Gastrocnemius medialis (tissue), 4 donors: ENCODE measurements at regions of chr5 and their contacts with region 1.

Region 1: GRCh38 chr5:141564216-141564692 is 54.5 kb downstream of the DIAPH1 start:
- DNase-seq: peak; percentile 59 to 63
- ATAC-seq: peak; percentile 77
- H3K4me3 ChIP-seq: peak overlapping the region in 2 of 4 donors; percentile 8 to 20
- H3K27ac ChIP-seq: peak overlapping the region; percentile 77 to 92 (median 88)
- H3K4me1 ChIP-seq: peaks cover 31 to 40% of the 10 kb centered on the region in 2 donors
- H3K27me3 ChIP-seq: no peaks in the 10 kb centered on the region
- CTCF ChIP-seq: peak; percentile 92 to 100 (median 96)
- POLR2A ChIP-seq: no peak

Region 2: DNA sequence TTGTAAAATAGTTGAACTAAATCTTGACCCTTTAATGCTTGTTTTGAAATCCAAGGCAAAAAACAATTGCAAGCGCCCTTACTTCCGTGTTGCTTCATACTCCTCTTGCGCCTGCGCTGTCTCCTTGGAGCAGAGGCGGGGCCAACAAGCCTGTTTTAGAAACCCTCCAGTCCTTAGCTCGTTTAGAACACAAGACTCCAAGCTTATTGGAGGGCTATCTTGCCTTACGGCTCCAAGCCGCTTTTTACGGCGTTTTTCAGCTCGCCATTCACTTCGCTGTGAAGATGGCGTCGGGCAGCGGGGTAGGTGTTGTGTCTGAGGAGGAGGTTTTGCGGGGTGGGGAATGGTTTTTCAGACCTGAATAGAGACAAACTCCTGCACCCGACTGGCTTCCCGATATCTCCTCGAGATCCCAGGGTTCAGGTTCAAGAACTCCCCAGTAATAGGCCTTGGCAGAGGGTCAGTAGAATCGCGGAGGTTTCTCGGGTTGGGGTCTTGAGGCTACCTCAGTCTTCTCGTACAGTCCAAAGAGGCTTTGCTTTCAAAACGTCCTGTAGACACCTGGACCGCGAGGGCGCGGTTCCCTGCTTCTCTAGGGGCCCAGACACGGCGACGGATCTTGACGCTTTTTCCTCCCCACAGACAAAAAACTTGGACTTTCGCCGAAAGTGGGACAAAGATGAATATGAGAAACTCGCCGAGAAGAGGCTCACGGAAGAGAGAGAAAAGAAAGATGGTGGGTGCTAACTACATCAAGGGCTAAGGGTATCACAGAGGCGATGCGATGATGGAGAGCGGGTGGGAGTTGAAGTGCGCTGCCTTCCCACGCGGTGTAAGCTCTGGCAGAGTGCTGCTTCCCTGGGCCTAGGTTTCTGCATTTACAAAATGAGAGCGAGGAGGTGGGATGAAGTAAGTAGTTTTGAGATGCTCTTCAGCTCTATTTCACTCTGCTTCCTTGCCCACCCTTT is 863.8 kb before region 1 on chr5 and contains the start of gene ZMAT2:
- in situ Hi-C with region 1: loop called in 1 of 4 experiments (anchors 25 kb)
- intact Hi-C with region 1: no loop called
- DNase-seq: peak; percentile 92 to 96
- ATAC-seq: peak; percentile 100
- H3K4me3 ChIP-seq: peak within 1 kb of the TSS; percentile 66 to 98 (median 80)
- H3K27ac ChIP-seq: peak within 1 kb of the TSS; percentile 79 to 89 (median 82)
- H3K4me1 ChIP-seq: peaks cover 15 to 16% of the 10 kb centered on the region in 2 donors
- H3K27me3 ChIP-seq: no peaks in the 10 kb centered on the region
- CTCF ChIP-seq: no peak
- POLR2A ChIP-seq: peak; percentile 84 to 87
- total RNA-seq, gene ZMAT2: 44.2 to 56.5 (median 51.9) TPM

Region 3: GRCh38 chr5:141223112-141223783 is 341.0 kb before region 1 on chr5 and contains the start of gene PCDHB14:
- in situ Hi-C with region 1: loop called in 2 of 4 experiments (anchors 25 kb)
- intact Hi-C with region 1: no loop called
- DNase-seq: no peak
- ATAC-seq: peak in 1 of 2 donors; percentile 61
- H3K4me3 ChIP-seq: peak within 1 kb of the TSS; percentile 3 to 47 (median 28)
- H3K27ac ChIP-seq: no peak within 1 kb of the TSS
- H3K4me1 ChIP-seq: no peaks in the 10 kb centered on the region
- H3K27me3 ChIP-seq: peaks cover 0 to 17% (median 0%) of the 10 kb centered on the region in 3 donors
- CTCF ChIP-seq: peak in 1 of 5 experiments; percentile 29
- POLR2A ChIP-seq: no peak
- total RNA-seq, gene PCDHB14: 0.62 to 1.9 (median 0.76) TPM

Region 4: DNA sequence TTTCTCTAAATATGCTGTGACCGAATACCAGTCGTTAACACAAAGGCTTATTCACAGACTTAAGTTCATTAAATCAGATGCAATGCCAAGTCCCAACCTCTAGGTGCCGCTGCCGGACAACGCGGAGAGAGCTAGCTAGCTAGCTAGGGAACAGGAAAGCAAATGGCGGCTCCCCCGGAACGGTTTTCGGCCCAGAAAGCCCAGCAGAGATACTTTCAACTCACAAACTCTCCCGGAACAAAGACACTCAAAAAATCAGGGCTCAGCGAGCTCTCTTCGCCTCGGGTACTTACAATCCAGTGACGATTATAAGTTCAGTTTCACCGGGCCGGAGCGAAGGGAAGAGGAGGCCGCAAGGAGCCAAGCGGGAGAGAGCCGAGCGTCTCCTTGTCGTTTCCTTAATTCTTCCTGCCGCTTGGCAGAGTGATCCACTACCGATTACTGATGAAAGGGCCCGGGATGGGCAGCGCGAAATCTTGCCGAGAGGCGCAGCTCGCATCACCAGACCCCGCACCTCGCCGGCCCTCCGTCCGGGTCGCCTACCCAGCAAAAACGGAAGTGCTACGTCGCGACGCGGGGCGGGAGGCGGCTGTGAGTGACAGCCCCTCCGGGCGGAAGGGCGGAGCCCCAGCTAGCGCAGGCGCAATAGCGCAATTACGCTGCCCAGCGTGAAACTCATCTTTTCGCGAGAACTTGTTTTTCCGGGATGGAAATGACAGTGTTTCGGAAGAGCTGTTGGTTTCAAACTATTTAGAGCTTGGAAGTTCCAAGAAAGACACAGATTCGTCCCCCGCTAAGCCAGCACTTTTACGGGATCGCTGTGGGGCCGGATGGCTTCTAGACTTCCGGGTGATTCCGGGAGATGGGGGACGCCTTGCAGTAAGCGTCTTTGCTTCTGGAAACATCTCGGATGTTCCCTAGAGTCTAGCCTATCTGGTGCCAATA is 243.8 kb before region 1 on chr5 and contains the start of gene TAF7:
- in situ Hi-C with region 1: loop called in 2 of 4 experiments (anchors 10 kb)
- intact Hi-C with region 1: loop called (anchors 2 kb)
- DNase-seq: peak; percentile 82 to 88
- ATAC-seq: peak; percentile 94 to 97
- H3K4me3 ChIP-seq: peak within 1 kb of the TSS; percentile 62 to 86 (median 84)
- H3K27ac ChIP-seq: peak within 1 kb of the TSS; percentile 85 to 97 (median 94)
- H3K4me1 ChIP-seq: peaks cover 32 to 35% of the 10 kb centered on the region in 2 donors
- H3K27me3 ChIP-seq: no peaks in the 10 kb centered on the region
- CTCF ChIP-seq: peak; percentile 79 to 95 (median 88)
- POLR2A ChIP-seq: peak; percentile 99 to 100
- total RNA-seq, gene TAF7: 60.9 to 91.2 (median 79.8) TPM

Region 5: DNA sequence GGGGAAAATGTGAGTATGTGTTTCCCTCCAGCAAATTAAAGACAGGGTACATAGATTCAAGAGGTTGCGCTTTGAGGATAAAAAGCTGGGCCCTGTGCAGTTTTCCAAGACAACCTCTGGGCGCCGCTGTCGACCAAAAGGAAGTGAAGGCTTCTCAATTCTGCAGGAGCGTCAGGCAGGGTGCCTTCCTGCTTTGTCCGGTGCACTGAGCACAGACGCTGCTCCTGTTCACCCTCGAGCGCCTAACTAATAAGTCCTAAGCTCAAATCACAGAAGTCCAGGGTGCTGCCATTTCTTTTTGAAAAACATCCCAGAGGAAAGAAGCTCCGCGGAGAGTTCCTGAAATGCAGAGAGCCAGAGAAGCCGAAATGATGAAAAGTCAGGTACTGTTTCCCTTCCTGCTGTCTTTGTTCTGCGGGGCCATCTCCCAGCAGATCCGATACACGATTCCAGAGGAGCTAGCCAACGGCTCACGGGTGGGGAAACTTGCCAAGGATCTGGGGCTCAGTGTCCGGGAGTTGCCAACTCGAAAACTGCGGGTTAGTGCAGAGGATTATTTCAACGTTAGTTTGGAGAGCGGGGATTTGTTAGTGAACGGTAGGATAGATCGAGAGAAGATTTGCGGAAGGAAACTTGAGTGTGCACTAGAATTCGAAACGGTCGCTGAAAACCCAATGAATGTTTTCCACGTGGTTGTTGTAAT is 214.2 kb before region 1 on chr5 and contains the start of gene PCDHGB1:
- in situ Hi-C with region 1: loop called in 1 of 4 experiments (anchors 10 kb)
- intact Hi-C with region 1: no loop called
- DNase-seq: peak in 1 of 2 donors; percentile 42
- ATAC-seq: peak; percentile 42 to 87
- H3K4me3 ChIP-seq: peak within 1 kb of the TSS; percentile 14 to 31 (median 27)
- H3K27ac ChIP-seq: peak within 1 kb of the TSS in 1 of 4 donors; percentile 29
- H3K4me1 ChIP-seq: no peaks in the 10 kb centered on the region
- H3K27me3 ChIP-seq: peaks cover 0 to 26% (median 9%) of the 10 kb centered on the region in 3 donors
- CTCF ChIP-seq: peak in 4 of 5 experiments; percentile 18 to 53 (median 38)
- POLR2A ChIP-seq: no peak
- total RNA-seq, gene PCDHGB1: 0.20 to 1.1 (median 0.74) TPM

Region 6: DNA sequence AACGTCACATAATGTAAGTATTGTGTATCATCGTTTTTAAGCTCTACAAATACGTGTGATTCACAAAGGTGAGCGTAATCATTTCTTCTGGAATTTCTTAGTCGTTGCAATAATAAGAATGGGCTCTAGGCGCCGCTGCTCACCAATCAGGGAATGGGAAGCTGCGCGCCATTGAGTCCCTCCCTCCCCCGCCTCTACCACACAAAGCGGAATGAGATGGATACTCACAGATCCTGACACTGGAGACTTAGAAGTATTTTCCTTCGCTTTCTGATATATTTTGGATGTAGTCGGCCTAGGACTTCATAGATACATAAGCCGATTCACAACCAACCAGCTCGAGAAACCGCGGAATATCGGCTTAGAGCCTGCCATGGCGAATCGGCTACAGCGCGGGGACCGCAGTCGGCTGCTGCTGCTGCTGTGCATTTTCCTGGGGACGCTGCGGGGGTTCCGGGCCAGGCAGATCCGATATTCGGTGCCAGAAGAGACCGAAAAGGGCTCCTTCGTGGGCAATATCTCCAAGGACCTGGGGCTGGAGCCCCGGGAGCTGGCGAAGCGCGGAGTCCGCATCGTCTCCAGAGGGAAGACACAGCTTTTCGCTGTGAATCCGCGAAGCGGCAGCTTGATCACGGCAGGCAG is 143.3 kb before region 1 on chr5 and contains the start of gene PCDHGA11:
- in situ Hi-C with region 1: loop called in 3 of 4 experiments (anchors 5 to 10 kb)
- intact Hi-C with region 1: loop called (anchors 2 kb)
- DNase-seq: peak in 1 of 2 donors; percentile 47
- ATAC-seq: peak; percentile 54 to 63
- H3K4me3 ChIP-seq: peak within 1 kb of the TSS; percentile 48 to 56 (median 53)
- H3K27ac ChIP-seq: peak within 1 kb of the TSS; percentile 23 to 55 (median 36)
- H3K4me1 ChIP-seq: peaks cover 12 to 44% of the 10 kb centered on the region in 2 donors
- H3K27me3 ChIP-seq: peaks cover 0 to 10% (median 0%) of the 10 kb centered on the region in 3 donors
- CTCF ChIP-seq: peak; percentile 49 to 71 (median 57)
- POLR2A ChIP-seq: no peak
- total RNA-seq, gene PCDHGA11: 1.2 to 3.3 (median 1.3) TPM

Region 7: GRCh38 chr5:141475625-141476131 is 88.6 kb before region 1 on chr5 and contains the start of gene PCDHGC3:
- in situ Hi-C with region 1: loop called in 1 of 4 experiments (anchors 5 kb)
- intact Hi-C with region 1: loop called (anchors 1 kb)
- DNase-seq: peak; percentile 92 to 95
- ATAC-seq: peak; percentile 95
- H3K4me3 ChIP-seq: peak within 1 kb of the TSS; percentile 69 to 83 (median 75)
- H3K27ac ChIP-seq: peak within 1 kb of the TSS; percentile 82 to 91 (median 88)
- H3K4me1 ChIP-seq: peaks cover 48 to 53% of the 10 kb centered on the region in 2 donors
- H3K27me3 ChIP-seq: no peaks in the 10 kb centered on the region
- CTCF ChIP-seq: peak in 4 of 5 experiments; percentile 36 to 63 (median 58)
- POLR2A ChIP-seq: peak; percentile 35 to 67
- total RNA-seq, gene PCDHGC3: 11.8 to 14.5 (median 13.8) TPM